Mucosa of descending colon (tissue), 3 donors: ENCODE measurements at regions of chr2 and their contacts with region 1.

Region 1: GRCh38 chr2:10122386-10123280 is at the start of gene RRM2:
- DNase-seq: peak; percentile 91 to 97 (median 93)
- ATAC-seq: peak; percentile 82
- H3K4me3 ChIP-seq: peak within 1 kb of the TSS; percentile 28
- H3K4me1 ChIP-seq: peaks cover 46% of the 10 kb centered on the region
- CTCF ChIP-seq: no peak
- total RNA-seq, gene RRM2: 8.5 to 65.3 (median 12.5) TPM

Region 2: GRCh38 chr2:9440058-9440727 is 682.4 kb before region 1 on chr2:
- intact Hi-C with region 1: no loop called
- DNase-seq: no peak
- ATAC-seq: no peak
- H3K4me3 ChIP-seq: no peak overlapping the region
- H3K4me1 ChIP-seq: no peaks in the 10 kb centered on the region
- CTCF ChIP-seq: no peak

Region 3: DNA sequence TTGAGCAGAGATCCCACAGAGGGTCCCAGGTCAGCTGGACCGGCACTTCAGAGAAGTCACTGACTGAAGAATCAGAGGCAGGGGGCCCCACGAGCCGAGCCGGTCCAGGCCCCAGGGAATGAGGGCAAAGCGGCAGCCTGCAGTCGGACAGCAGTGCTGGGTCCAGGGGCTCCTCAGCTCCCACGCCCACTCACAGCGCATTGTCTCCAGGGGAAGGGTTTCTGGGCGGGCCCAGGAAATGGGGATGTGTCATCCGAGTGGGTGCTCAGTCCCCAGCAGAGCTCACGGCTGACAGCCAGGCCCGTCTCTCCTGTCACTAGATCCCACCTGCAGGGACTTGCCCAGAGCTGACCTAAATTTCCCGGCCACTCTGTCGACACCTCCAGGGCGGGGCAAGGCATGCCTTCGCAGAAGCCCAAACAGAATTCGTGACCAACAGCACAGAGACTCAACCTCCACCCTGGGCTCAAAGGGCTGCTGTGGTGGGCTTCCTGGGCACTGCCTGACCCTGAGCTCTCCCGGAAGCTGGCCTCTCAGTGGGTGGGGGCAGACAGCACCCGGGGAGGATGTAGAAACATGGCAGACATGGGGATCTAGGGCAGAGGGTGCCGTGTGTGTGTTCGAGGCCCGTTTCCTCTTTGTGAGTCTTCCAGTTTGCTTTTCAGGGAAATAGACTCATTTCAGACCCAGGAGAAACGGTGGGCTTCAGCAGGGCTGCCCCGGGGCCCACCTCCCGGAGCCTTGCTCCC is 321.5 kb before region 1 on chr2:
- intact Hi-C with region 1: no loop called
- DNase-seq: no peak
- ATAC-seq: no peak
- H3K4me3 ChIP-seq: no peak overlapping the region
- H3K4me1 ChIP-seq: peaks cover 40% of the 10 kb centered on the region
- CTCF ChIP-seq: no peak

Region 4: DNA sequence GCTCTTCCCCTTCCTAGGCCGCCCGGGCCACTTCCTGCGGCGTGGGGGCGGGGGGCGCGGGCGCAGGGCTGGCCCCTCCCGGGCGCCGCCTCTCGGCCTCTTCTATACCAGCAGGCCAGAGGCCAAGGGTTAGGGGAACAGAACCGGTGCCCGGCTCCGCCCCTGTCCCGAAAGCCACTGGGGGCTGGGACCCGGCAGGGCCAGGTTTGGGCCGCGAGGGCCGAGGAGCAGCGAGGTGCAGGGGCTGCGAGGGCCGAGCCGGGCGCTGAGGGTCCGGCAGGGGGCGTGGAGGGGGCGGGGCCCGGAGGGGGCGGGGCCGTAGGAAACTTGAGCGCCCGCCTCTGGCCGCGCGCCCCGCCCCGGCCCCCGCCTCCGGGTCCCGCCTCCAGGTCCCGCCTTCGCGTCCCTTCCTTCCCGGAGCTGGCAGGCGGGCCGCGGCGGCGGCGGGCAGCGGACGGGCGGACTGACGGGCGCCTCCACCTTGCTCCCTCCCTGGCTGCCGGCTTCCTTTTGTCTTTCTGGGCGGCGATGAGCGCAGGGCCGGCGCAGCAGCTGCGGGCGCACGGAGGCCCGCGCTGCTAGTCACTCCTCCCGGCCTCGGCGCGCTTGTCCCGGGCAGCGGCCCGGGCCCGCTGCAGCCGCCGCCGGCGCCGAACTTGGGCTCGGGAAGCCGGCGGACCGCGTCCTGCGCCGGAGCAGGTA is 180.0 kb after region 1 on chr2 and contains the start of gene HPCAL1:
- intact Hi-C with region 1: loop called in 1 of 2 experiments (anchors 10 kb)
- DNase-seq: peak; percentile 93 to 95 (median 93)
- ATAC-seq: peak; percentile 90
- H3K4me3 ChIP-seq: peak within 1 kb of the TSS; percentile 84
- H3K4me1 ChIP-seq: peaks cover 12% of the 10 kb centered on the region
- CTCF ChIP-seq: peak; percentile 44
- total RNA-seq, gene HPCAL1: 42.0 to 98.1 (median 47.7) TPM